HEK293 (cell line): ENCODE measurements at regions of chr16 and their contacts with region 1.

Region 1: DNA sequence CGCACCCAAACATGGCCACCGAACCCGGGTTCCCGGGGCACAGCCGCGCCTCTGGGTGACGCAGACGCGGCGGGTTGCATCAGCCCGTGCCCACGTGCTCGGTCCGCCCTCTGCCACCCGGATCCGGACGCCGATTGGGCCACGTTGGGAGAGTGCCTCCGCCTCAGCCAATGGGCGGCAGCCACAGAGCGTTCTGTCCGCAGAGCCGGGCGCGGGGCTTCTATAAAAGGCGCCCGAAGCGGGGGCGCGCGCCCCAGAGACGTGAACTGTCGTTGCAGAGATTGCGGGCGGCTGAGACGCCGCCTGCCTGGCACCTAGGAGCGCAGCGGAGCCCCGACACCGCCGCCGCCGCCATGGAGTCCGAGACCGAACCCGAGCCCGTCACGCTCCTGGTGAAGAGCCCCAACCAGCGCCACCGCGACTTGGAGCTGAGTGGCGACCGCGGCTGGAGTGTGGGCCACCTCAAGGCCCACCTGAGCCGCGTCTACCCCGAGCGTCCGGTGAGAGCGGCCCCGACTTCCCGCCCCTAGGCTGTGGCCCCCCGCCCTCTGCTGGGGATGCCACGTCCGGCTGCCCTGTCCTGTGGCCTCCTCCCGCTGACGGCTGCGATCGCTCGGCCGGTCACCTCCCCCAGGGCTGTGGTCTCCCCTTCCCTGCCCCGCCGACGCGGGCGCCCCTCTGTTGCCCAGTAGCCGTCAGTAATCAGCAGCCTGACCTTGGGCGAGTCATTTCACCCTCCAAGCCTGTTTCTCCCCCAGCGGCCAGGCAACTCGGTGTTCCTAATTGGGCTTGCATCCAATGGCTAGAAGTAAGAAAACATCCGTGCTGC is at the start of gene HERPUD1:
- H3K4me3 ChIP-seq: peak within 1 kb of the TSS; percentile 67
- H3K27ac ChIP-seq: peak within 1 kb of the TSS; percentile 74
- H3K4me1 ChIP-seq: peaks cover 3% of the 10 kb centered on the region; the same call in 1 of the 2 replicates
- CTCF ChIP-seq: peak; percentile 74

Region 2: DNA sequence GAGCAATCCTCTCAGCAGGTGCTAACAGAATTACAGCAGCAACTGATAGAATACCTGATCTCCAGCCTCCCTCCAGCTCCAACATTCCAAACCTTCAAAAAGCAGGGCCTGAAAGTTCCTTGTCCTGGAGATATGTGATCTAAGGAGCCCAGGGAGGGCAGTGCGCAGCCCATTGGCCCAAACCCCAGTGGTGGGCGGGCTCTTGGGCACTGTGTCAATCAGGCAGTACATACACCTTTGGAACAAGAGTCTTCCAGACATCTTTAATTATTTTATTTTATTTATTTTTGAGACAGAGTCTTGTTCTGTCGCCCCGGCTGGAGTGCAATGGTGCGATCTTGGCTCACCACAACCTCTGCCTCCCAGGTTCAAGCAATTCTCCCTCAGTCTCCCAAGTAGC is 42.9 kb before region 1 on chr16:
- CTCF ChIA-PET with region 1: no interaction called
- POLR2A ChIA-PET with region 1: no interaction called
- H3K4me3 ChIP-seq: no peak overlapping the region
- H3K27ac ChIP-seq: no peak overlapping the region
- H3K4me1 ChIP-seq: no peaks in the 10 kb centered on the region
- CTCF ChIP-seq: no peak

Region 3: DNA sequence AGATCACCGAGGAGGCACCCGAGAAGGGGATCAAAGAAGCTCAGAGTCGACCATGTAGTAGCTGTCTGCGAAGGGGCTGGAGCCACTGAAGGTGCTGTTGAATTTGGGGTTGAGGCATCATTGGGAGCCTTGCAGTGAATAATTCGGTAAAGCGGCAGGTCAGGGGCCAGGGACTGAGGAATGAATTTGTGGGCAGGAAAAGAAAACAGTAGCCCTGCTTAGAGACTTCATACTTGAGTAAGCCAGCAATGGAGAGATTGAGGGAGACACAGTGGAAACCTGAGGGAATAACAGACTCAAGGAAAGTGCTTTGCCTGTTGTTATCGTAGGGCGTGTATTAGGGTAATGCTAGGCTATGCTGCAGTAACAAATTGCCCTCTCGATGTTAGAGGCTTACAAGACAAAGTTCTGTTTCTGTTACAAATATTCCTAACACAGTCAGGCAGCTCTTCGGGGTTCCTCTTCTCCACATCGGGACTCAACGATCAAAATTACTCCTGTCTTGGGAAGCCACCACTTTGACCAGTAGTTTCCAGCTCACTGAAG is 13.6 kb before region 1 on chr16:
- CTCF ChIA-PET with region 1: interaction called, 4 read pairs
- POLR2A ChIA-PET with region 1: interaction called, 11 read pairs
- H3K4me3 ChIP-seq: no peak overlapping the region
- H3K27ac ChIP-seq: no peak overlapping the region
- H3K4me1 ChIP-seq: no peaks in the 10 kb centered on the region
- CTCF ChIP-seq: no peak

Region 4: GRCh38 chr16:56944954-56945839 is 13.1 kb after region 1 on chr16:
- CTCF ChIA-PET with region 1: interaction called, 5 read pairs
- POLR2A ChIA-PET with region 1: interaction called, 16 read pairs
- H3K4me3 ChIP-seq: no peak overlapping the region
- H3K27ac ChIP-seq: no peak overlapping the region
- H3K4me1 ChIP-seq: no peaks in the 10 kb centered on the region
- CTCF ChIP-seq: no peak